Activated CD4-positive, alpha-beta memory T cell treated with anti-CD3 and anti-CD28 coated beads for 36 hours (primary cell): ENCODE measurements at regions of chr19 and their contacts with region 1.

Region 1: DNA sequence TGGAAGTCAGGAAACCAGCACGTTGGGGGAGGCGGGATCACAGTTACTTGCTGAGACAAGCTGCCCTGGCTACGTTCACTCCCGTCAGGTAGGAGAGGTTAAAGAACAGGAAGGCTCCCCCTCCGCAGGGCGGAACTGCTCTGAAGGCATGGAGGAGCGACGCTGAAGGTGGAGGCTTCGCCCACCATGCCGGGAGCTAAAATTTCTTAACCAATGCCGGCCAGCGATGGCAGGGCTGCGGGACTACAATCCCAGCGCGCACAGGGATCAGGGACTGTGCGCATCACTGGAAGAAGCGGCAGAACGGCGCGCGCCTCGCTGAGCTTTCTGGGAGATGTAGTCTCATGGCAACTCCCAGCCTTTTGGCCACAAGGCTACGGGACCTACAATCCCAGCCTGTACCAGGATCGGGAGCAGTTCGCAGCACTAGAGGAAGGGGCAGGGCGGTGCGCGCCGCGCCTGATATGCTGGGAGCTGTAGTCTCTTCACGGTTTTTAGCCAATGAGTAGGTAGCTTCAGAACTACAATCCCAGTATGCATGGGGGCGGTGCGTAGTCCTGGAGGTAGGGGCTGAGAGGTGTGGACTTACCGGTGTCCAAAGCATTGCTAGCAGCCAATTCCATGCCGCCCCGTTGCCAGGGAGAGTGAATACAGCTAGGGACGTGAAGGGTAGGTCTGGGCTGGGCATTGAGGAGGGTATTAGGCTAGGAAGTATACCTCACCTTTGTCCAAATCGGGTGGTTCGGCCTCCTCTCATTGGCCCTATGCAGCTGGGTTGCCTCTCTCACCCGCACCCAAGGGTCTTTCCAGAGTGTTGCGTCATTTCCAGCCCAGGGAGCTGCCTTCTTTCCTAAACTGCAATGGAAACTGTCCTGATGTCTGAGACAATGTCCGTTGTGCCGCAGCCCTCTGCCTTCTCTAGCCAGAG is 12.8 kb upstream of the ZNF682 start:
- DNase-seq: peak; percentile 86
- H3K4me3 Mint-ChIP-seq: peak overlapping the region; percentile 84
- H3K27ac Mint-ChIP-seq: peak overlapping the region; percentile 65
- H3K4me1 Mint-ChIP-seq: peaks cover 13% of the 10 kb centered on the region
- H3K27me3 Mint-ChIP-seq: no peaks in the 10 kb centered on the region

Region 2: GRCh38 chr19:19732579-19733501 is 319.3 kb before region 1 on chr19 and contains the start of gene ZNF14:
- CTCF ChIA-PET with region 1: no interaction called
- POLR2A ChIA-PET with region 1: no interaction called
- intact Hi-C with region 1: loop called (anchors 1 kb)
- DNase-seq: peak; percentile 96
- H3K4me3 Mint-ChIP-seq: peak within 1 kb of the TSS; percentile 99
- H3K27ac Mint-ChIP-seq: peak within 1 kb of the TSS; percentile 94
- H3K4me1 Mint-ChIP-seq: peaks cover 17% of the 10 kb centered on the region
- H3K27me3 Mint-ChIP-seq: no peaks in the 10 kb centered on the region
- total RNA-seq, gene ZNF14: 6.8 to 7.9 TPM

Region 3: DNA sequence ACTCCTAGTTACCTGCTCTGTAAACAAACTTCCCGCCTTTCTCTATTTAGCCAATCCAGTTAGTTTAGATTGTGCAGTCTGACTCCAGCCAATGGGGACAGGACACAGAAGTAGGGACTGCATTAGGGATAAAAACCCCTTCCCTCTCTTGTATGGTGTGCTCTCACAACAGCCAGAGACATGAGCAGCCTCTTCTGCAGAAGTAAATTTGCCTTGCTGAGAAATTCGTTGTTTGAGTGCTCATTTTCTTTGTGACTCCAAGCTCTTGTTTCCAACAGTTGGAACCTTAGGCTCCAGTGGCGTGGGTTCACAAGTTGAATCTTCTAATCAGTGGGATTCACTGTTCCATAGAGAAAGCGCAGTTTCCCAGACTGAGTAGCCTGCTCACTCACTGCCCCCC is 85.2 kb before region 1 on chr19:
- CTCF ChIA-PET with region 1: no interaction called
- POLR2A ChIA-PET with region 1: no interaction called
- intact Hi-C with region 1: no loop called
- DNase-seq: no peak
- H3K4me3 Mint-ChIP-seq: no peak overlapping the region
- H3K27ac Mint-ChIP-seq: no peak overlapping the region
- H3K4me1 Mint-ChIP-seq: no peaks in the 10 kb centered on the region
- H3K27me3 Mint-ChIP-seq: no peaks in the 10 kb centered on the region

Region 4: DNA sequence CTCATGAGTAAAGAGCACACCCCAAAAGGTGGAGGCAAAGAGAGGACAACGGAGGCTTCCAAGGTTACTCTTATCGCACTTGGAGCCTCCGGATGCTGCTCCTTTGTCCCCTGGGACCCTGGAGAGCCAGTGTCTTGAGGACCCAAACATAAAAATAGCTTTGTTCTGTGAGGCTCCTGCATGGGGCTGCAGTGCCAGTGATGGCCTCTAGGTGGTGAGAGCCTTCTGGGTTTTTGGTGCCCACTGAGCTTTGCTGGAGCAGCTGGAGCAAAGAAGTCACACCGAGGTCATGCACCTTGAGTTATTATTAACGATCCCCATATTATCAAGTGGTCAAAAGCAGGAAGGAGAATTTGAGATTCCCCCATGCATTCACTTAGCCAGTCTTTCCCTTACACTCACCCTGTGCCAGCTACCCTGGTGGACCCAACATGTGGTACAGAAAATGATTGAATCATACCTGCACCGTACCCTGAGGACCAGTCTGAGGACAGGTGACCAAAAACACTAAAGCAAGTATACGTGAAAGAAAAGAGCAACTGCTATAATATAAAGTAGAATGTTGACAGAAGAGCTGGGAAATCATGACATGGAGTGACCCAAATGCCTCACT is 54.3 kb before region 1 on chr19:
- CTCF ChIA-PET with region 1: interaction called, 10 read pairs
- POLR2A ChIA-PET with region 1: no interaction called
- intact Hi-C with region 1: no loop called
- DNase-seq: peak; percentile 66
- H3K4me3 Mint-ChIP-seq: no peak overlapping the region
- H3K27ac Mint-ChIP-seq: no peak overlapping the region
- H3K4me1 Mint-ChIP-seq: no peaks in the 10 kb centered on the region
- H3K27me3 Mint-ChIP-seq: no peaks in the 10 kb centered on the region

Region 5: DNA sequence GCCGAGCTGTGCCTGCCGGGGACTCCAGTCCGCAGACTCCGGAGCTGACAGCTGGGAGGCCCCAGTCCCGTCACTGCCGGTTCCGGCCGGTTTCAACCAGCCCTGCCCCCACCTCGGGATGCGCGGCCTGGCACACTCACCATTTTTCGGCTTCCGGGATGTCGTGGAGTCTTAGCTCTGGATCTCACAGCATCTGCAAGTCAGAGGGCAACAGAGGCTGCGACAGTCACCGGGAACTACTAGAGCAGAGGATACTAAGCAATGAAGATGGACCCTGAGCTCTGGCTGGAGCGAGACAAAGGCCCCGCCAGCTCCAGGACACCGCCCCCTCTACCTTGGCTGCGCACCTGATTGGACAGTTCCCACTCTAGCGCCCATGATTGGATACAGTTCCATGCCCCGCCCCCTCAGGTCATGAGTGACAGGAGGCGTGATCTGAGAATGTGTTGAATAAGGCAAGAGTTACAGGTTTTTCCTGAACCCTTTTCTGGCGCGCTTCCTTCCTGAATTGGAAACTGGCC is 12.8 kb before region 1 on chr19 and contains the start of gene ZNF682:
- CTCF ChIA-PET with region 1: no interaction called
- POLR2A ChIA-PET with region 1: interaction called, 15 read pairs
- intact Hi-C with region 1: loop called (anchors 1 kb)
- DNase-seq: peak; percentile 97
- H3K4me3 Mint-ChIP-seq: peak within 1 kb of the TSS; percentile 96
- H3K27ac Mint-ChIP-seq: peak within 1 kb of the TSS; percentile 91
- H3K4me1 Mint-ChIP-seq: peaks cover 12% of the 10 kb centered on the region
- H3K27me3 Mint-ChIP-seq: no peaks in the 10 kb centered on the region
- total RNA-seq, gene ZNF682: 7.0 to 9.1 TPM

Region 6: GRCh38 chr19:20167020-20167644 is 115.0 kb after region 1 on chr19 and contains the start of gene ZNF486:
- CTCF ChIA-PET with region 1: interaction called, 3 read pairs
- POLR2A ChIA-PET with region 1: no interaction called
- intact Hi-C with region 1: loop called (anchors 1 kb)
- DNase-seq: peak; percentile 97
- H3K4me3 Mint-ChIP-seq: peak within 1 kb of the TSS; percentile 98
- H3K27ac Mint-ChIP-seq: peak within 1 kb of the TSS; percentile 92
- H3K4me1 Mint-ChIP-seq: peaks cover 45% of the 10 kb centered on the region
- H3K27me3 Mint-ChIP-seq: no peaks in the 10 kb centered on the region
- total RNA-seq, gene ZNF486: 12.5 to 12.9 TPM

Region 7: DNA sequence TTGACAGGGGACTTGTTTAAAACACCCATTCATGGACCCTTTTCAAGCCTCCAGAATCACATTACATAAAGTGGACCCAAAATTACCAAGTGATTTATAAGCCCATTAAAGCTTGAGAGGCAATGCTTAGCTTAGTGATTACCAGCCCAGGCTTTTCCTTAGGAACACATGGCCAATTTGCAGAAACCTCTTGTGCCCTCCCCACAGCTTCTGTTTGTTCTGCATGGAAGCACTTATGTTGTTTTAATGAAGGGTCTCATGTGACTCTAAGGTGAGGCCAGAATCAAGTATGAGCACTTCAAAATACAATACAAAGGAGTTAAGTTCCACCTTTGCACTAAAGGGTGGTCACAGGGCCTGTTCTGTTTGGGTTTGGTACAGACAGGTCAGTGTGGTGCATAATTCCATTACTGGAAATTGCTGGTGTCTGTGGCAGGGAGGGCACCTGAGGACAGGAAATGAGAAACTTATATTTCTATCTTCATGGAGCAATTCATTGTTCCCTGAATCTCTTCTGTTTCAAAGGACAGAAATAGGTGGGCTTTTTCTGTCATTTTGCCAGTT is 130.2 kb after region 1 on chr19:
- CTCF ChIA-PET with region 1: no interaction called
- POLR2A ChIA-PET with region 1: no interaction called
- intact Hi-C with region 1: no loop called
- DNase-seq: no peak
- H3K4me3 Mint-ChIP-seq: no peak overlapping the region
- H3K27ac Mint-ChIP-seq: no peak overlapping the region
- H3K4me1 Mint-ChIP-seq: peaks cover 3% of the 10 kb centered on the region
- H3K27me3 Mint-ChIP-seq: no peaks in the 10 kb centered on the region